PC-3 (cell line): ENCODE measurements at regions of chr11 and their contacts with region 1.

Region 1: GRCh38 chr11:57530596-57531507 is at the start of gene TIMM10:
- DNase-seq: peak; percentile 100
- ATAC-seq: peak; percentile 95
- H3K4me3 ChIP-seq: peak within 1 kb of the TSS; percentile 83
- H3K27ac ChIP-seq: peak within 1 kb of the TSS; percentile 14; the same call in 1 of the 2 replicates
- H3K4me1 ChIP-seq: peaks cover 11% of the 10 kb centered on the region; the same call in 1 of the 2 replicates
- H3K27me3 ChIP-seq: no peaks in the 10 kb centered on the region
- CTCF ChIP-seq: no peak
- total RNA-seq, gene TIMM10: 233 and 313 TPM in 2 replicates

Region 2: DNA sequence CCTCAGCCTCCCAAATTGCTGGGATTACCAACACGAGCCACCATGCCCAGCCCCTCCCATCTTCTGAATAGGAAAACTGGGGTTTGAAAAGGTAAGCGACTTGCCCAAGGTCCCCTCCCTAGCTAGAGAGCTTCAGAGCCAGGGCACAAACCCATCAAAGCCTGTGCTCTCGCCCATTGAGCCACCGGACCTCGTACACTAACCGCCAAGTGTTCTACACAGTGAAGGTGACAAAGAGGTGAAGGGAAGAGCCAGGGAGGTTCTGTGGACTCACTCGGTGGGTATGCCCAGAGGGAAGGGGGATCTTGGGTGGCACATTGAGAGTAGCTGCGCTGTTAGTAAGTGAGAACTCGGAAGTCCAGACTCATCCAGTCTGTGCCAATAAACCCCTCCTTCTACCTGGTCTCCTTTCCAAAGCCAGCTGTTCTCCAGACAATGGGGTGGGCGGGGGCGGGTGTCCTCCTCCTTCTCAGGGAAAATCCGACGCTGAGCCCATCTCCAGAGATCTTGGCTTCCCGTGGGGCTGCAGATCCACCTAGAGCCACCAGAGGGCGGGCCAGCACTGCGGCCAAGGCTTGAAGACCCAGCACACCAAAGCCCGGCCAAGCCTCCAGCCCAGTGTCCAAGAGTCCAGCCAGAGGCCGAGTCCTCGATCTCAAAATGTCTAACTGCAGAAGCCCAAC is 73.8 kb before region 1 on chr11:
- CTCF ChIA-PET with region 1: interaction called, 4 read pairs
- POLR2A ChIA-PET with region 1: no interaction called
- intact Hi-C with region 1: loop called (anchors 1 kb)
- DNase-seq: peak; percentile 94
- ATAC-seq: peak; percentile 69
- H3K4me3 ChIP-seq: peak overlapping the region; percentile 58; the same call in 1 of the 2 replicates
- H3K27ac ChIP-seq: no peak overlapping the region
- H3K4me1 ChIP-seq: peaks cover 24% of the 10 kb centered on the region
- H3K27me3 ChIP-seq: peaks cover 13% of the 10 kb centered on the region
- CTCF ChIP-seq: peak; percentile 91

Region 3: GRCh38 chr11:57493507-57494503 is 37.0 kb before region 1 on chr11:
- CTCF ChIA-PET with region 1: interaction called, 7 read pairs
- POLR2A ChIA-PET with region 1: interaction called, 5 read pairs
- intact Hi-C with region 1: loop called (anchors 1 kb)
- DNase-seq: peak; percentile 85
- ATAC-seq: peak; percentile 79
- H3K4me3 ChIP-seq: no peak overlapping the region
- H3K27ac ChIP-seq: no peak overlapping the region
- H3K4me1 ChIP-seq: no peaks in the 10 kb centered on the region
- H3K27me3 ChIP-seq: no peaks in the 10 kb centered on the region
- CTCF ChIP-seq: peak; percentile 98

Region 4: DNA sequence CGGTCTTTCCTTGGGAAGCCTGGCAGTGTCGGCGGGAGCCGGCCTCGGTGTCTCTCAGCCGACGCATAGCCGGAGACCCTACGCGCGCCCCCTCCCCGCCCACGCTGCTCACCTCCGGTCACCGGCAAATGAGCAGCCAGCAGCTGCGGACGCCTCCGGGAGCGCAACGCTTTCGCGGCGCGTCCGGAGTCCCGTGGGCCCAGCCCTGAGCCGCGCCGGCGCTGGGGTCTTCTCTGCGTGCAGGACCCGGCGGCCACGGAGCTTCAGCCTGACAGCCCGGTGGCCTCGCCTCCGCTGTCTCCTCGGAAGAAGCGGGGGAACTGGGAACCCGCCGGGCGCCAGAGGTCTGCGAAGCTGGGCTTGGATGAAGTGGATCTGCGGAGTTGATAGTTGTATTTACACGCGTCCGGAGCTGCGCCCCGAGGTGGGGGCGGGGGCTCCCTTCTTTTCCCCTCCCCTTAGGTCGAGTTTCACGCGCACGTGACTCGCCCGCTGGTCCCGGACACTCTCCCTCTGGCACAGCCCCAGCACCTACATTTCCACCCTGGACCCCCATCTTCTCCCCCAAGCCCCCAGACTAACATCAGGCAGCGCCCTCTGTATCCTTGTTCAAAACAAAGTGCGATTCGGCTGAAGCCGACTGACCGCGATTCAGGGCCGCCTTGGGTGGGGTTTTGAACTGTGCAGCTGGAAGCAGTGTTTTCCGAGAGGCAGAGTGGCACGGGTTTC is 15.4 kb before region 1 on chr11 and contains the start of gene SLC43A1:
- CTCF ChIA-PET with region 1: no interaction called
- POLR2A ChIA-PET with region 1: no interaction called
- intact Hi-C with region 1: no loop called
- DNase-seq: peak; percentile 46
- ATAC-seq: peak; percentile 57
- H3K4me3 ChIP-seq: peak within 1 kb of the TSS; percentile 94
- H3K27ac ChIP-seq: no peak within 1 kb of the TSS
- H3K4me1 ChIP-seq: peaks cover 9% of the 10 kb centered on the region
- H3K27me3 ChIP-seq: no peaks in the 10 kb centered on the region
- CTCF ChIP-seq: peak; percentile 25; the same call in 1 of the 2 replicates
- total RNA-seq, gene SLC43A1: 7.4 and 12.4 TPM in 2 replicates

Region 5: DNA sequence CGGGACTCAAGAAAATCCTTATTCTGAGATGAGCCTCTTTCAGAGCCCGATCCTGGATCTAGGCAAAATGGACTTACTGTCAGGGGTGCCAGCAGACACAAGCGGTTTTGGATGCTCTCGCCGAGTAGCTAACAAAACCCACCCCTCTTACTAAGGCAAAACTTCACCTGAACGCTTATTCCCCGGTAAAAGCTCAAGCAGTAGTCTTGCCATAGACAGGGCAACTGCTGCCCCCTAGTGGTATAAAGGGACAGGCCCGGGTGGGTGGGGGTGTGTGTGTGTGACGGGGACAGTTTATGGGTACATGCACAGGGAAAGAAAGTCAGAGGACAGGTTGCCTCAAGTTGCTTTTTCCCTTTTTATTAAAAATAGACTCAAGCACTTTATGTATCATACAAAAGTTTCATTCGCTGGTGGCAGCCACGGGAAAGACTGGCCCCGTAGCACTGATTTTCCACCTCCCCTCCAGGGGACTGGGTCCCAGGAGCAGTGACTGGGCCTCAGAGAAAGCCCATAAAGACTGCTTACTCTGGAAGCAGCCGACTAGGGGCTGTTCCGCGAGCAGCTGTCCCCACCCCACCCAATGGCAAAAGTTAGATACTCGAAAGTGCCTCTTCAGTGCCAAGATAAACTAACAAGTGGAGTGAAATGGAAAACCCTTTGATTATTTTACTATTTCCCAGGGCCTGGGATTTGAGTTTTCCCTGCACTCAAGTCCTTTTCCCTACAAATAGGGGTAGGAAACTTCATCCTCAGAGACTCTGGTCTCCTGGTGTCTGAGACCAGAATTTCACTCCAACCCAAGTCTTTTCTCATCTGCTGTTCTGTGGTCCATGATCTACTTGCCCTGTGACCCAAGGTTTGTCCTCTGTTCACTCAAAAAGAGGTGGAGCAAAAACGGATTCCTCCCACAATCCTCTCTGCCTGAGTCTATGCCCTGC is 114.2 kb after region 1 on chr11:
- CTCF ChIA-PET with region 1: interaction called, 4 read pairs
- POLR2A ChIA-PET with region 1: no interaction called
- intact Hi-C with region 1: loop called (anchors 1 kb)
- DNase-seq: peak; percentile 88
- ATAC-seq: peak; percentile 65
- H3K4me3 ChIP-seq: no peak overlapping the region
- H3K27ac ChIP-seq: no peak overlapping the region
- H3K4me1 ChIP-seq: peaks cover 15% of the 10 kb centered on the region
- H3K27me3 ChIP-seq: peaks cover 29% of the 10 kb centered on the region
- CTCF ChIP-seq: peak; percentile 96

Region 6: DNA sequence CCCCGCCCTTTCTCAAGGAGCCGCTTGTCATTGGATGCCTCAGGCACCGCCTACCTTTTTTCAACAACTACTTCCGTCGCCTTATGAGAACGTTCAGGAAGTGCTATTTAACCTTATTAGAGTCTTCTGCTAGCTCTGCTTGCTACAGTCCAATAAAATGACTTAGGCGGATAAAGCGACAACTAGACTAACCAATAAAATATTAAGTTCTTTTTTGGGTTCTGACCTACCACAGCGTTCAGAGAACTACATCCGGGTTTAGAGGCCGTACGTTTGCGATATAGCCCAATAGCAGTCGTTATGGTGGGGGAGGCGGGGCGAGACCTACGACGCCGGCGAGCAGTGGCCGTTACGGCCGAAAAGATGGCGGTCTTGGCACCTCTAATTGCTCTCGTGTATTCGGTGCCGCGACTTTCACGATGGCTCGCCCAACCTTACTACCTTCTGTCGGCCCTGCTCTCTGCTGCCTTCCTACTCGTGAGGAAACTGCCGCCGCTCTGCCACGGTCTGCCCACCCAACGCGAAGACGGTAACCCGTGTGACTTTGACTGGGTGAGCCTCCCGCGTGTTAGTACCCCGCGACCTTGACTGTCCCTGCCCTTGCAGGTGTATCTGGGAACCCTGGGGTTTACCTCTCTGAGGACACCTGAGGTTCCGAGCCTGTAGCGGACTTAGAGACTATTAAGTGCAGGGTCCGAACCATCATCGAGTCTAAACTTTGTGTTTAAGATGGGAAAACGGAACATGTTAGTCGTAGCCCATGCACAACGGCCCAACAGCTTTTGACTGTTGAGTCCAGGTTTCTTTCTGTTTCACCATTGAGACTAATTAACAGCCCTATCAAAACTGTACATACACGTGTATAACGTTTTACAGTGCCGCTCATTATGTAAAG is 181.7 kb after region 1 on chr11 and contains the start of gene TMX2:
- CTCF ChIA-PET with region 1: no interaction called
- POLR2A ChIA-PET with region 1: no interaction called
- intact Hi-C with region 1: loop called (anchors 1 kb)
- DNase-seq: peak; percentile 99
- ATAC-seq: peak; percentile 92
- H3K4me3 ChIP-seq: peak within 1 kb of the TSS; percentile 99
- H3K27ac ChIP-seq: peak within 1 kb of the TSS; percentile 75
- H3K4me1 ChIP-seq: peaks cover 24% of the 10 kb centered on the region
- H3K27me3 ChIP-seq: no peaks in the 10 kb centered on the region
- CTCF ChIP-seq: no peak
- total RNA-seq, gene TMX2: 228 and 241 TPM in 2 replicates